ENCODE measurements at regions of chrX and their contacts with region 1.

Region 1: DNA sequence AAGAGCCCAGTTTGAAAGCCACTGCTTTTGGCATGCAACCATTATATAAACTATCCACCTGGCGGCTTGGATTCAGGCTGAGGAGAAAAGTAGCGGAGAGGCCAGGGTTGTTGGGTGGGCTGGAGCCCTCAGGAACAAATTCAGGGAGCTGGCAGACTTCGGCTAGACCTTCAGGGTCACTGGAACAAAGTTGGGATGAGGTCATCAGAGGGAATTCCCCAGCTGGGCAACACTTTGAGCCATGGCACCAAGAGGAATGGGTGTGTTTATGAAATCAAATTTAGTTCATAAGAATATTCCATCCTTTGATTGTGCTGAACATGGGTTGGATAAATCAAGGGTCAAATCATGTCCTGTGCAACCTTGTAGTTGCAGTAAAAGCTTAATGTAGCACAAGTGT is 22.0 kb downstream of the MTMR1 start:
- DNase-seq: no peak
- ATAC-seq: no peak
- H3K4me3 ChIP-seq: no peak overlapping the region
- H3K4me3 Mint-ChIP-seq: no peak overlapping the region
- H3K27ac ChIP-seq: no peak overlapping the region
- H3K27ac Mint-ChIP-seq: peak overlapping the region in 8 of 9 donors; percentile 6 to 80 (median 67)
- H3K4me1 ChIP-seq: peaks cover 0 to 8% of the 10 kb centered on the region in 2 donors
- H3K4me1 Mint-ChIP-seq: peaks cover 16 to 60% (median 28%) of the 10 kb centered on the region in 7 donors
- H3K27me3 ChIP-seq: no peaks in the 10 kb centered on the region
- H3K27me3 Mint-ChIP-seq: no peaks in the 10 kb centered on the region

Region 2: GRCh38 chrX:149950681-149951080 is 764.5 kb before region 1 on chrX:
- CTCF ChIA-PET with region 1: no interaction called
- POLR2A ChIA-PET with region 1: no interaction called
- intact Hi-C with region 1: loop called (anchors 1 to 5 kb)
- DNase-seq: peak in 3 of 9 donors; percentile 6 to 19 (median 9)
- ATAC-seq: no peak
- H3K4me3 ChIP-seq: no peak overlapping the region
- H3K4me3 Mint-ChIP-seq: no peak overlapping the region
- H3K27ac ChIP-seq: no peak overlapping the region
- H3K27ac Mint-ChIP-seq: peak overlapping the region in 1 of 9 donors; percentile 9
- H3K4me1 ChIP-seq: no peaks in the 10 kb centered on the region
- H3K4me1 Mint-ChIP-seq: peaks cover 0 to 7% (median 0%) of the 10 kb centered on the region in 7 donors
- H3K27me3 ChIP-seq: no peaks in the 10 kb centered on the region
- H3K27me3 Mint-ChIP-seq: no peaks in the 10 kb centered on the region

Region 3: DNA sequence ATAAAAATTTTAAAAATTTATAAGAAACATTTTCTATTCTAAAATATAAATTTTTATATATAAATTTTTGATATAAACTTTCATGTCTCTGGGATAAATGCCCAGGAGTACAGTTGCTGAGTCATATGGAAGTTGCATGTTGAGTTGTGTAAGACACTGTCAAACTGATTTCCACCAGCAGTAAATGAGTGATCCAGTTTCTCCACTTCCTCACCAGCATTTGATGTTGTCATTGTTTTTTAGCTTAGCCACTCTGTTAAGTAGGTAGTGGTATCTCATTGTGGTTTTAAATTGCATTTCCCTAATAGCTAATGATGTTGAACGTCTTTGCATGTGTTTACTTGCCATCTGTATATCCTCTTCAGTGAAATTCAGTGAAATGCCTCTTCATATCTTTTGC is 285.6 kb before region 1 on chrX:
- CTCF ChIA-PET with region 1: no interaction called
- POLR2A ChIA-PET with region 1: no interaction called
- intact Hi-C with region 1: no loop called
- DNase-seq: no peak
- ATAC-seq: peak; percentile 57
- H3K4me3 ChIP-seq: no peak overlapping the region
- H3K4me3 Mint-ChIP-seq: no peak overlapping the region
- H3K27ac ChIP-seq: no peak overlapping the region
- H3K27ac Mint-ChIP-seq: no peak overlapping the region
- H3K4me1 ChIP-seq: no peaks in the 10 kb centered on the region
- H3K4me1 Mint-ChIP-seq: peaks cover 0 to 3% (median 0%) of the 10 kb centered on the region in 7 donors
- H3K27me3 ChIP-seq: no peaks in the 10 kb centered on the region
- H3K27me3 Mint-ChIP-seq: peaks cover 0 to 3% (median 0%) of the 10 kb centered on the region in 5 donors

Region 4: DNA sequence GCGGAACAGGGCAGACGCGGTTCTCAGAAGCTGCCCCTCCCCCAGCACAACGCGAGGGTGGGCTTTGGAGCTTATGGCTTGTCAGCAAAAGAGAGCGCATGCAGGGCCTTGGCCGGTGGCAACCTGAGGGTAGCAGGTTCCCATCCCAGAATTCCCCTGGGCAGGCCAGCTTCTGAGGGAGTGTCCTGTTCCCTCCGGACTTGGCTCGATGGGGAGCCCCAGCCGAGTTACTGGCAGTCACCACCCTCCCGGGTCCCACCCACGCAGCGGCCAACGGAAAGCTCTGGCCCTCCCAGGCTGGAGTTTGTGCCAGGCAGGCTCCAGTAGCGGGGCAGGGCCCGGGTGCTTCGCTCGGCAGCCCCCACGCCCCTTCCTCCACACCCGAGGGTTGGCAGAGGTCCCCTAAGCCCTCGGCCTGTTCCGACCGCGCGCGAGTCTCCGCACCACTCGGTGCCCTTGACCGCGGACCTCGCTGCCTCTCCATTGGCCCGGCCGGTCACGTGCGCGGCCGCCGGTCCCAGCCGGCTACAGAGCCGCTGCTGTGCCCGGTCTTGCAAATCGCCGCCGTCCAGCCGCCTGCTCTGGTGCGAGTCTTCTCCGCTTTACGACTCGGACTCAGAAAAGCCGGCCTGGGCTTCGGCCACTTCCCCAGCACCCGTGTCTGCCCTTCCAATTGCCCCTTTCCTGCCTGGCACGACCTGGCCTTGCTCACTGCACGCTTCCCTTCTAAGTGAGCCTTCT is 167.6 kb before region 1 on chrX:
- CTCF ChIA-PET with region 1: interaction called, 5 read pairs
- POLR2A ChIA-PET with region 1: no interaction called
- intact Hi-C with region 1: loop called in 1 of 2 experiments (anchors 1 kb)
- DNase-seq: peak in 1 of 9 donors; percentile 25
- ATAC-seq: peak; percentile 53
- H3K4me3 ChIP-seq: peak overlapping the region; percentile 43
- H3K4me3 Mint-ChIP-seq: peak overlapping the region; percentile 74 to 91 (median 82)
- H3K27ac ChIP-seq: peak overlapping the region; percentile 14
- H3K27ac Mint-ChIP-seq: peak overlapping the region in 7 of 9 donors; percentile 52 to 96 (median 82)
- H3K4me1 ChIP-seq: peaks cover 11 to 13% of the 10 kb centered on the region in 2 donors
- H3K4me1 Mint-ChIP-seq: peaks cover 10 to 35% (median 24%) of the 10 kb centered on the region in 7 donors
- H3K27me3 ChIP-seq: no peaks in the 10 kb centered on the region
- H3K27me3 Mint-ChIP-seq: no peaks in the 10 kb centered on the region

Region 5: GRCh38 chrX:150664290-150664689 is 50.9 kb before region 1 on chrX:
- CTCF ChIA-PET with region 1: no interaction called
- POLR2A ChIA-PET with region 1: no interaction called
- intact Hi-C with region 1: loop called in 1 of 2 experiments (anchors 10 kb)
- DNase-seq: no peak
- ATAC-seq: no peak
- H3K4me3 ChIP-seq: no peak overlapping the region
- H3K4me3 Mint-ChIP-seq: no peak overlapping the region
- H3K27ac ChIP-seq: no peak overlapping the region
- H3K27ac Mint-ChIP-seq: peak overlapping the region in 1 of 9 donors; percentile 6
- H3K4me1 ChIP-seq: no peaks in the 10 kb centered on the region
- H3K4me1 Mint-ChIP-seq: peaks cover 0 to 6% (median 0%) of the 10 kb centered on the region in 7 donors
- H3K27me3 ChIP-seq: no peaks in the 10 kb centered on the region
- H3K27me3 Mint-ChIP-seq: no peaks in the 10 kb centered on the region

Region 6: GRCh38 chrX:150693775-150694574 is 21.2 kb before region 1 on chrX:
- CTCF ChIA-PET with region 1: interaction called, 11 read pairs
- POLR2A ChIA-PET with region 1: interaction called, 7 read pairs
- intact Hi-C with region 1: loop called in 1 of 2 experiments (anchors 1 kb)
- DNase-seq: peak; percentile 12 to 65 (median 51)
- ATAC-seq: peak; percentile 62
- H3K4me3 ChIP-seq: peak overlapping the region; percentile 61
- H3K4me3 Mint-ChIP-seq: peak overlapping the region; percentile 85 to 98 (median 94)
- H3K27ac ChIP-seq: peak overlapping the region; percentile 80
- H3K27ac Mint-ChIP-seq: peak overlapping the region; percentile 95 to 99 (median 97)
- H3K4me1 ChIP-seq: peaks cover 37 to 42% of the 10 kb centered on the region in 2 donors
- H3K4me1 Mint-ChIP-seq: peaks cover 25 to 68% (median 61%) of the 10 kb centered on the region in 7 donors
- H3K27me3 ChIP-seq: no peaks in the 10 kb centered on the region
- H3K27me3 Mint-ChIP-seq: no peaks in the 10 kb centered on the region